Ovary (tissue), 10 donors: ENCODE measurements at regions of chr6 and their contacts with region 1.

Region 1: DNA sequence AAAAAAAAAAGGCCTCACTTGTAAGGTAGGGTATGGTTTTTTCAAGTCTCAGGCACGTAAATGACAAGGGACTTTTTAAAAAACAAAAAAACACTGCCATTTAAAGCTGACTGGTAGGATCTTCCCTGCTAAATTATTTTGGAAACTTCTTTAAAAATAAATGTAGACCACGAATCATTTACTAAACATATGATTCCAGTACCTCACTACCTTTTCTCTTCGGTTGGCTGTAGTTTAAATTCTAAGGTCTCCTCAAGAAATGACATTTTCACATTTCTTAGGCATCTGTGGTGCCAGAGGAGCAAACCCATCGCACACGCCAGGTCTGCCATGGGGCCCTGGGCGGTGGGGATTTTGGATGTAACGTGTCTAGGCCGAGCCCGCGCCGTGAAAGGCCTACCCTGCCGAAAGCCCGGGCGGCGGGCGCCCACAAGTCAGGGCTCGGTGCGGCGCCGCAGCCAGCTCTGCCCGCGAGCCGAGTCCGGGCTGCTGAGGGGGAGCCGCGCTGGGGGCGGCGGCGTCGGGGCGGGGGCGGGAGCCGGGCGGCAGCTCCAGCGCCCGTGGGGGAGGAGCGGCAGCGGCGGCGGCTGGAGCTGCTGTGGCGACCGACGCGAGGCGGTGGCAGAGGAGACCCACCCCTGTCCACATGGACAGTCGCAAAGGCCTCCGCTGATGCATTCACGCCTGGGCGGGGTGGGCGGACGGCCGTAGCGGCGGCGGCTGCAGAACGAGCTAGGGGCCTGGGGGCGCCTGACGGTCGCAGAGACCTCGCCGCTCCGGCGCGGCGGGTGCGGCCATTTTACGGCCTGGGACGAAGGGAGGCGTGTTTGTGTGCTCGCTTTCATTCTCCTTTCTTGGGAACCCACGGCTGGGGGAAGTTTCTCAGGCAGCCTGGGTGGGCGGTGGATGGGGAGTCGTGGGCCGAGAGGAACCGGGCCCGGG is at the start of gene SENP6:
- DNase-seq: peak; percentile 75 to 86 (median 81)
- H3K4me3 ChIP-seq: peak within 1 kb of the TSS; percentile 82
- H3K27ac ChIP-seq: peak within 1 kb of the TSS; percentile 99 to 100
- H3K4me1 ChIP-seq: peaks cover 12% of the 10 kb centered on the region
- H3K27me3 ChIP-seq: no peaks in the 10 kb centered on the region
- CTCF ChIP-seq: peak in 1 of 3 donors; percentile 10
- EP300 ChIP-seq: no peak
- POLR2A ChIP-seq: peak; percentile 78
- total RNA-seq, gene SENP6: 108 to 158 (median 134) TPM

Region 2: GRCh38 chr6:75243333-75244062 is 358.1 kb before region 1 on chr6 and contains the start of gene COX7A2:
- intact Hi-C with region 1: loop called in 1 of 4 experiments (anchors 5 kb)
- DNase-seq: peak; percentile 78 to 88 (median 85)
- H3K4me3 ChIP-seq: peak within 1 kb of the TSS; percentile 86
- H3K27ac ChIP-seq: peak within 1 kb of the TSS; percentile 79 to 84
- H3K4me1 ChIP-seq: peaks cover 5% of the 10 kb centered on the region
- H3K27me3 ChIP-seq: no peaks in the 10 kb centered on the region
- CTCF ChIP-seq: no peak
- EP300 ChIP-seq: no peak
- POLR2A ChIP-seq: peak; percentile 90
- total RNA-seq, gene COX7A2: 178 to 297 (median 202) TPM

Region 3: DNA sequence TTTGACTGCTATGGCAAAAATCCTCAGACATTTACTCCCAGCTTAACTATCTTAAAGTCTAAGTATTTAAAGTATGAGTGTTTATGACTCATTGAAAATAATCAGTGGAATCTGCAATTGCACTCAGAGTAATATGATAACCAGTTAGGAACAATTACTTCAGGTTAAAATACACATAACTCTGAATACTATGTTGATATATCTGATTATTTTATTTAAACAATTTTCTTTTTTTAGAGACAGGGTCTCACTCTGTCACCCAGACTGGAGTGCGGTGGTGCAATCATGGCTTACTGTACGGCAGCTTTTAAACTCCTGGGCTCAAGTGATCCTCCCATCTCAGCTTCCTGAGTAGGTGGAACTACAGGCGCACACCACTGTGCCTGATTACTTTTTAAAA is 151.9 kb before region 1 on chr6:
- intact Hi-C with region 1: no loop called
- DNase-seq: no peak
- H3K4me3 ChIP-seq: no peak overlapping the region
- H3K27ac ChIP-seq: no peak overlapping the region
- H3K4me1 ChIP-seq: peaks cover 2% of the 10 kb centered on the region
- H3K27me3 ChIP-seq: no peaks in the 10 kb centered on the region
- CTCF ChIP-seq: no peak
- EP300 ChIP-seq: no peak
- POLR2A ChIP-seq: no peak

Region 4: GRCh38 chr6:75748743-75749501 is 147.3 kb after region 1 on chr6 and contains the start of gene MYO6:
- intact Hi-C with region 1: loop called in 1 of 4 experiments (anchors 5 kb)
- DNase-seq: peak; percentile 61 to 78 (median 71)
- H3K4me3 ChIP-seq: peak within 1 kb of the TSS; percentile 81
- H3K27ac ChIP-seq: peak within 1 kb of the TSS; percentile 62 to 70
- H3K4me1 ChIP-seq: peaks cover 2% of the 10 kb centered on the region
- H3K27me3 ChIP-seq: no peaks in the 10 kb centered on the region
- CTCF ChIP-seq: no peak
- EP300 ChIP-seq: no peak
- POLR2A ChIP-seq: peak; percentile 43
- total RNA-seq, gene MYO6: 7.5 to 20.8 (median 13.1) TPM

Region 5: DNA sequence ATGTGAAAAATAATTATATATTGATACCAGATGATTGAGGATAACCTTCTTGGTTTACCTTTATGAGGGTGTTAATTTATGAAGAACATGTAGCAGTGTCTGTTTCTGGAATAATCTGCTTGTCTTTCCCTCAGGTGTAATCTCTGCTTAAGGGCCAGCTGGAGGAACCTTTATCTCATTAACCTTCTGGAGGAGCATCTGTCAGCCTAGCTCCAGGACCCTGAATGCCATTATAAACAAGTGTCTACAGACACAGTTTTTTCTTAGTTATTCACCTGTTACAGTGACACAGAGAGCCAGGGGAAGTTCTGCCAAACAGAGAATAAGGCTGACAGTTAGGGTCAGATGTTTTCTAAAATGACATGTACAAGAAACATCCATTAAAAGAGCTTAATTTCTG is 471.0 kb after region 1 on chr6 and contains the start of gene IMPG1:
- intact Hi-C with region 1: no loop called
- DNase-seq: no peak
- H3K4me3 ChIP-seq: no peak within 1 kb of the TSS
- H3K27ac ChIP-seq: no peak within 1 kb of the TSS
- H3K4me1 ChIP-seq: no peaks in the 10 kb centered on the region
- H3K27me3 ChIP-seq: no peaks in the 10 kb centered on the region
- CTCF ChIP-seq: no peak
- EP300 ChIP-seq: no peak
- POLR2A ChIP-seq: no peak
- total RNA-seq, gene IMPG1: not detected